ENCODE measurements at regions of chr14 and their contacts with region 1.

Region 1: GRCh38 chr14:92768795-92769194 is 20.4 kb upstream of the LGMN start:
- DNase-seq: no peak
- H3K4me3 Mint-ChIP-seq: no peak overlapping the region
- H3K27ac Mint-ChIP-seq: no peak overlapping the region
- H3K4me1 Mint-ChIP-seq: peaks cover 21% of the 10 kb centered on the region
- H3K27me3 Mint-ChIP-seq: peaks cover 52% of the 10 kb centered on the region

Region 2: GRCh38 chr14:92556255-92556741 is 212.5 kb before region 1 on chr14:
- intact Hi-C with region 1: loop called (anchors 5 kb)
- DNase-seq: no peak
- H3K4me3 Mint-ChIP-seq: no peak overlapping the region
- H3K27ac Mint-ChIP-seq: peak overlapping the region; percentile 74
- H3K4me1 Mint-ChIP-seq: peaks cover 51% of the 10 kb centered on the region
- H3K27me3 Mint-ChIP-seq: peaks cover 45% of the 10 kb centered on the region

Region 3: DNA sequence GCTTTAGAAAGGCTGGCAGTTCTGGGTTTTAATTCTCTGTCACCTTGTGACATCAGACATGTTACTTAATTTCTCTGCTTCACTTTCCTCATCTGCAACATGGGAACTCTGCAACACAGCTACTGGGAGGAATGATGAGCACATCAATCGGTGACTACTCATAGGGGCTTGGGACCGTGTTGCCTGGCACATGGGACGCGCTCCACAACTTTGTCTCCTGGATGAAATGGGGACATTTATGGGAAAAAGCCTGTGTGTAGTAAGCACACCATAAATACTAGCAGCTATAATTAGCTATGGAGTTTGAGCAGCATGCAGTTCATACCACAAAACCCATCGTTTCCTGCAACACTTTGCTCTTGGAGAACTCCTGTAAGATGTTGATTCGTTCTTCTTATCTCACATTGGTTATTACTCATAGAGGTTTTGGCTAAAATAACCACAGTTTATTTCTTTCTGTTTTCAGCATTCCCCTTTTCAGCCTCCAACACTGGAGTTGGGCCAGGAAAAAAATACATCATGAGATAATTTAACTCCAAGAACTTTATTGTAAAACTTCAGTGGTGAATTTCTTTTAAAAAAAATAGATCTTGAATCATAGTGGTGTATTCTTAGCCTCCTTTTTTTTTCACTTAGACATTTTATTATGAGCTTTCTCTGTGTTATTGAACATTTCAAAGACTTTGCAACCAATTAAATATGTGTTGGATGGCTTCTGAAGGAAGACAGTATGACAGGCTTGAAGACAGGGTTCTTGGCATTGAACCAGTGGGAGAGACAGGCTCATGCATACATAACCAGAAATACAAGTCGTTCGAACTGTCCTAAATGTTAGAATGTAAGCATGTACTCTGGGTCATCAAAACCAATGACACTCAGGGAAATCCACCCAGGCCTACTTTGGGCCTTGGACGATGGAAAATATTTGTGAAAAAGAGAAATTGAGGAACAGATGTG is 182.5 kb before region 1 on chr14:
- intact Hi-C with region 1: loop called (anchors 2 kb)
- DNase-seq: peak; percentile 44
- H3K4me3 Mint-ChIP-seq: peak overlapping the region; percentile 49
- H3K27ac Mint-ChIP-seq: peak overlapping the region; percentile 65
- H3K4me1 Mint-ChIP-seq: peaks cover 63% of the 10 kb centered on the region
- H3K27me3 Mint-ChIP-seq: peaks cover 43% of the 10 kb centered on the region

Region 4: GRCh38 chr14:92729626-92730358 is 39.0 kb before region 1 on chr14:
- intact Hi-C with region 1: loop called (anchors 1 kb)
- DNase-seq: no peak
- H3K4me3 Mint-ChIP-seq: no peak overlapping the region
- H3K27ac Mint-ChIP-seq: no peak overlapping the region
- H3K4me1 Mint-ChIP-seq: peaks cover 24% of the 10 kb centered on the region
- H3K27me3 Mint-ChIP-seq: peaks cover 60% of the 10 kb centered on the region

Measured in activated T-helper 2 cell treated with anti-CD3 and anti-CD28 coated beads, Interferon-gamma antibody, Interleukin-2, Interleukin-4, amounts not matched to agents 10 μg/mL and 5 μg/mL and 100 μg/mL, durations not matched to agents 14 hours and 24 hours and 36 hours (primary cell).